Heart left ventricle (tissue), 16 donors: ENCODE measurements at regions of chr21 and their contacts with region 1.

Region 1: GRCh38 chr21:30434033-30434631 is 4.1 kb downstream of the KRTAP13-4 start:
- DNase-seq: peak in 1 of 5 donors; percentile 7
- ATAC-seq: no peak
- H3K4me3 ChIP-seq: no peak overlapping the region
- H3K27ac ChIP-seq: no peak overlapping the region
- H3K4me1 ChIP-seq: no peaks in the 10 kb centered on the region
- H3K27me3 ChIP-seq: no peaks in the 10 kb centered on the region
- CTCF ChIP-seq: peak; percentile 20 to 59 (median 50)
- POLR2A ChIP-seq: no peak

Region 2: GRCh38 chr21:30340441-30341241 is 93.5 kb before region 1 on chr21:
- intact Hi-C with region 1: loop called in 2 of 10 experiments (anchors 5 to 10 kb)
- DNase-seq: peak in 2 of 5 donors; percentile 23 to 25
- ATAC-seq: no peak
- H3K4me3 ChIP-seq: no peak overlapping the region
- H3K27ac ChIP-seq: no peak overlapping the region
- H3K4me1 ChIP-seq: no peaks in the 10 kb centered on the region
- H3K27me3 ChIP-seq: no peaks in the 10 kb centered on the region
- CTCF ChIP-seq: peak; percentile 70 to 86 (median 81)
- POLR2A ChIP-seq: no peak